CD4-positive, alpha-beta memory T cell (primary cell): ENCODE measurements at regions of chr4 and their contacts with region 1.

Region 1: GRCh38 chr4:83110223-83110945 is 4.1 kb downstream of the PLAC8 start:
- DNase-seq: peak; percentile 84 to 90 (median 87)
- H3K4me3 ChIP-seq: peak overlapping the region; percentile 60 to 75
- H3K4me3 Mint-ChIP-seq: peak overlapping the region; percentile 93 to 98 (median 95)
- H3K27ac ChIP-seq: peak overlapping the region; percentile 58
- H3K27ac Mint-ChIP-seq: peak overlapping the region; percentile 90 to 98 (median 96)
- H3K4me1 ChIP-seq: peaks cover 56% of the 10 kb centered on the region
- H3K4me1 Mint-ChIP-seq: peaks cover 27 to 70% (median 46%) of the 10 kb centered on the region in 4 donors
- H3K27me3 ChIP-seq: no peaks in the 10 kb centered on the region
- H3K27me3 Mint-ChIP-seq: no peaks in the 10 kb centered on the region

Region 2: GRCh38 chr4:82437285-82438005 is 672.9 kb before region 1 on chr4:
- CTCF ChIA-PET with region 1: no interaction called
- POLR2A ChIA-PET with region 1: no interaction called
- intact Hi-C with region 1: no loop called
- DNase-seq: no peak
- H3K4me3 ChIP-seq: no peak overlapping the region
- H3K4me3 Mint-ChIP-seq: no peak overlapping the region
- H3K27ac ChIP-seq: no peak overlapping the region
- H3K27ac Mint-ChIP-seq: peak overlapping the region in 2 of 7 donors; percentile 29 to 37
- H3K4me1 ChIP-seq: peaks cover 57% of the 10 kb centered on the region
- H3K4me1 Mint-ChIP-seq: peaks cover 49 to 82% (median 69%) of the 10 kb centered on the region in 4 donors
- H3K27me3 ChIP-seq: no peaks in the 10 kb centered on the region
- H3K27me3 Mint-ChIP-seq: no peaks in the 10 kb centered on the region

Region 3: DNA sequence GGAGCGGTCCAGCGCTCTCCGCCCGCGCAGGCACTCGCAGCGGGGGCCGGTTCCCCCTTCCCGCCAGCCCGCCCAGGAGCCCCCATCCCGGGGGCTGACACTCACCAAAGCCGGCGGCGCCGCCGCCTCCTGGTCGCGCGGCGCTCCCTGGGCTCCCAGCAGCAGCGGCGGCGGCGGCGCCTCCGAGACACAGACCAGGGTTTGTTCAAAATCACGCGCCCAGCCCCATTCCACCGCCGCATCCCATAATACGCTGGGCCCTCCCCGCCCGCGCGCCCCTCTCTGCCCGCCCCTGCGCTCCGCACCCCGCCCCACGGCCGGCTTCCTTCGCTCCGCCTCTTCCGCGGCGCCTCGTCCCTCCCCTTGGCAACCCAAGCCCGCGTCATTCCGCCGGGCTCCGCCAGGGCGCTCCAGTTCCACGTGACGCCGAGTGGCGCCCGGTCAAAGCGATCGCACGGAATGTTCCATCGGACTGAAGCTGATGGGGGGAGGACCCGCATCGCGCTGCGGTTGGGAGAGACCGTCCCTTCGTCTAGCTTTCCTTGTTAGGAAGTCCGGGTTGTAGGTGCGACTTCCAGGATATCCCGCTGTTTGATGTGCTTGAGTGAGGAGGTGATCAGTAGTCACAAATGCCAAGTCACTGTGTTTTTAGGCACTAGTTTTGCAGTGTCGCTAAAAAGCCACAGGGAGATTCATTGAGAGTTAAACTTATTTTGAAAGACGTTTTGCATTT is 97.5 kb before region 1 on chr4:
- CTCF ChIA-PET with region 1: interaction called, 4 read pairs
- POLR2A ChIA-PET with region 1: no interaction called
- intact Hi-C with region 1: loop called (anchors 2 kb)
- DNase-seq: peak; percentile 96 to 99 (median 97)
- H3K4me3 ChIP-seq: peak overlapping the region; percentile 88 to 98
- H3K4me3 Mint-ChIP-seq: peak overlapping the region; percentile 91 to 97 (median 95)
- H3K27ac ChIP-seq: peak overlapping the region; percentile 89
- H3K27ac Mint-ChIP-seq: peak overlapping the region; percentile 87 to 97 (median 94)
- H3K4me1 ChIP-seq: peaks cover 43% of the 10 kb centered on the region
- H3K4me1 Mint-ChIP-seq: peaks cover 33 to 52% (median 39%) of the 10 kb centered on the region in 4 donors
- H3K27me3 ChIP-seq: no peaks in the 10 kb centered on the region
- H3K27me3 Mint-ChIP-seq: no peaks in the 10 kb centered on the region

Region 4: DNA sequence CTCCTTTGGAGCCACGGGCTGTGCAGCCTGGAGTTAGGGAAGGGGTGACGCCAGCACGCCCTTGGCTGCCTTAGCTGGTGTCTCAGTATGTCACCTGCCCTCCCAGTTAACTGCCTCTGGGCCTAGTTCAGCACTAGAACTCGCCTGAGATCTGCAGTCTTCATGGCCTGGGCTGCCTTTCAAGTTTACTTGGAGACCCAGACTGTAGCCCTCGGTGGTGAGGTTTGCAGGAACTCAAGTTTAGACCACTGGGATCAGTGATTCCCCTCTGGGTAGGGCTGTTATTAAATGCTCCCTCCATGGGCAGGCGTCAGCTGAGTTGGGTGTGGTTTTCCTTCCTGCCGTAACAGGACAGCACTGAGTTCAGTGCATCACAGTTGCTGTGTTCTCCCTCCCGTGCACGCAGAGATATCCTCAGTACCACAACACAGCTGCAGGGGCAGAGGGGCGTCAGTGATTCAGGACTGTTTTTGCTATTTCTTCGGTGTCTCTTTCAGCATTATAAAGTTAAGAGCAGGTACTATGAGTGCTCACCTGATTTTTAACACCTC is 26.4 kb before region 1 on chr4:
- CTCF ChIA-PET with region 1: interaction called, 76 read pairs
- POLR2A ChIA-PET with region 1: interaction called, 88 read pairs
- intact Hi-C with region 1: loop called (anchors 2 kb)
- DNase-seq: peak; percentile 75 to 83 (median 78)
- H3K4me3 ChIP-seq: no peak overlapping the region
- H3K4me3 Mint-ChIP-seq: peak overlapping the region in 7 of 8 donors; percentile 43 to 73 (median 73)
- H3K27ac ChIP-seq: peak overlapping the region; percentile 45
- H3K27ac Mint-ChIP-seq: peak overlapping the region; percentile 77 to 97 (median 92)
- H3K4me1 ChIP-seq: peaks cover 30% of the 10 kb centered on the region
- H3K4me1 Mint-ChIP-seq: peaks cover 27 to 39% (median 34%) of the 10 kb centered on the region in 4 donors
- H3K27me3 ChIP-seq: no peaks in the 10 kb centered on the region
- H3K27me3 Mint-ChIP-seq: no peaks in the 10 kb centered on the region

Region 5: DNA sequence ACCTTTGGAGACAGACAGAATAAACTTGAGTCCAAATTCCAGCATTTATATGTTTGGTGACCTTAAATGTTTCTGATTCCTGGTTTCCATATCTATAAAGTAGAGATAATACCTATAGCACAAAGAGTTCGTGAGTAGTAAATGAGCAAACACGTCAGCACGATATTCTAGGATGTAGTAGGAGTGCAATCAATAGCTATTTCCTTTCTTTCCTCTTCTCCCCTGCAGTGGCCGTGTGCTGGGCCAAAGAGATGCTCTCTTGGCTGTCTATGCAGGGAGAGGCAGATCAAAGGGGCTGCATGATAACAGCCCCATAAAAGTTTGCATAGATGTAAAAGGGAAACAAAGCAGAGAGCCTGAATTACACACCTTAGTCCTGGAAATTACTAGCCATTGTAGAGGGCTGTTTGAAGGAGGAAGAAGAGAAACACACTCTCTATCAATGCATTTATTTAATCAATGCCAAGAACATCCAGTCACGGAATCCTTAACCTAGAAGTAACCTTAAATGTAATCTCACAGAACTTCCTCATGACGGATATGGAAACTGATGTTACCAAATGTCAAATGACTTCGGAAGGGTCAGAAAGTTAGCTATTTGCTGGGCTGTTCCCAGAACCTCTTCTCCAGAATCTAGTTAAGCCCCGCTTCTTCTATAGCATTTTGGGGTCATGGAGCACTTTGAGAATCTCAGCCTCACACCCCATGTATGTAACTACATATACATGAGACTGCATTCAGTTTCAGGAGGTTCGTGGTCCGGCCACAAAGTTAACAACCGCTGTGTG is 39.7 kb after region 1 on chr4:
- CTCF ChIA-PET with region 1: interaction called, 7 read pairs
- POLR2A ChIA-PET with region 1: interaction called, 5 read pairs
- intact Hi-C with region 1: loop called (anchors 5 kb)
- DNase-seq: no peak
- H3K4me3 ChIP-seq: no peak overlapping the region
- H3K4me3 Mint-ChIP-seq: no peak overlapping the region
- H3K27ac ChIP-seq: no peak overlapping the region
- H3K27ac Mint-ChIP-seq: no peak overlapping the region
- H3K4me1 ChIP-seq: peaks cover 3% of the 10 kb centered on the region
- H3K4me1 Mint-ChIP-seq: peaks cover 2 to 10% (median 6%) of the 10 kb centered on the region in 4 donors
- H3K27me3 ChIP-seq: no peaks in the 10 kb centered on the region
- H3K27me3 Mint-ChIP-seq: no peaks in the 10 kb centered on the region

Region 6: DNA sequence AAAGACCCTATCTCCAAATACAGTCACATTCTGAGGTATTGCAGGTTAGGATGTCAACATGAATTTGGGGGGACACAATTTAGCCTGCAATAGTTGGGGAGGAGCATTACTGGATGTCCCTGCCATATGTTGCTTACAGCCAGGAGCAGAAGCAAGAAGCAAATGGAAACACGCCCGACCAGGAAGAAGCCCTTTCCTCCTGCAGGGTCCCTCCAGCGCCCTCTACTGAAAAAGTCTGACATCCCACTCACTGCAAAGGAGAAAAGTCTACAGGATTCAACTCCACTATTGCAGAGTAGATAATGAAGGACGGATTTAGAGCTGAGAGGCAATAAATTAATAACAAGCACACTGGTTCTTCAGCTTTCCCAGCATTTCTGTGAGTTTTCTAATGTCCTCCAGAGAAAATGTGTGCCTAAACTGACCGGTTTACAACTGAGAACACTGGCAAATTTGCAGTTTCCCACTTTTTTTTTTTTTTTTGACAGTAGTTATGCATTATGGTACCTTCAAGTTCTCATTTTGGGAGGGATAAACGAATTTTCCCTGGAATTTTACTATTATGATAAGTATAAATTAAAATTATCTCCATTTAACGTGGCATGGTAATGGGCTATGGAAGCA is 142.5 kb after region 1 on chr4:
- CTCF ChIA-PET with region 1: interaction called, 108 read pairs
- POLR2A ChIA-PET with region 1: interaction called, 7 read pairs
- intact Hi-C with region 1: loop called (anchors 1 kb)
- DNase-seq: peak; percentile 78 to 81 (median 80)
- H3K4me3 ChIP-seq: no peak overlapping the region
- H3K4me3 Mint-ChIP-seq: peak overlapping the region in 4 of 8 donors; percentile 39 to 50 (median 44)
- H3K27ac ChIP-seq: no peak overlapping the region
- H3K27ac Mint-ChIP-seq: peak overlapping the region in 6 of 7 donors; percentile 41 to 78 (median 72)
- H3K4me1 ChIP-seq: peaks cover 23% of the 10 kb centered on the region
- H3K4me1 Mint-ChIP-seq: peaks cover 13 to 29% (median 16%) of the 10 kb centered on the region in 4 donors
- H3K27me3 ChIP-seq: no peaks in the 10 kb centered on the region
- H3K27me3 Mint-ChIP-seq: no peaks in the 10 kb centered on the region